CD8-positive, alpha-beta T cell (primary cell): ENCODE measurements at regions of chr20 and their contacts with region 1.

Region 1: DNA sequence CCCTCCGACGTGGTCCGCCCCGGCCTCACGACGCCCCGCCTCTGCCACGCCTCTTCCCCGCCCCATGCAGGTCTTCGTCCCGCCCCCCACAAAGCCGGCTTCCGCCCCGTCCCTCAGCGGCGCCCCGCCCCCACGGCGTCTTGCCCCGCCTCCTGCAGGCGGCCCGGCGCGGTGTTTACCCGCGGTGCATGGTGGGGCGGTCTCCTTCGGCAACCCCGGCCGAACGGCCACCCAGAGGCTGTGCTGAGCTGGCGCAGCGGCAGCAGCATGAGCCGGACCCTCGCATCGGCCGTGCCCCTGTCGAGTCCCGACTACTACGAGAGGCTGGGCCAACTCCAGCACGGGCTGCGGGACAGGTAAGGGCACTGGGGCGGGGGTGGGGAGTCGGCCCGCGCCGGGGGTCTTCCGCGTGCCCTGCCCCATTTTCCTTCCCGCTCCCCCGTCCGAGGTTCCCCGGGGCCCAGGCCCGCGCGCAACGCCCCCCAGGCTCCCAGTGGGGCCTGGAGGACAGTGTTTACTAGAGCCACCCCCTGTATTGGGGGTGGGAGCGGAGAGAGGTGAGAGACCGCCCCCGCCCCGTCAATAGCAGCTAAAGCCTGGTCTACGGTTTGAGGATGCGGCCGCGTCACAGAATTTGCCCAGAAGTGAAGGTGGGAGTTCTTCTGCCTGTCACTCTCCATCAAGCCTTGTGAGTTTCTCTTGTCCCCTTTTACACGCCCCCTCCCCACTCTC is at the start of gene KIZ:
- DNase-seq: peak; percentile 94 to 99 (median 98)
- ATAC-seq: peak; percentile 97
- H3K4me3 ChIP-seq: peak within 1 kb of the TSS; percentile 83 to 87
- H3K4me3 Mint-ChIP-seq: peak within 1 kb of the TSS; percentile 86
- H3K27ac ChIP-seq: peak within 1 kb of the TSS; percentile 68
- H3K27ac Mint-ChIP-seq: peak within 1 kb of the TSS; percentile 97
- H3K4me1 ChIP-seq: peaks cover 14% of the 10 kb centered on the region
- H3K4me1 Mint-ChIP-seq: peaks cover 30% of the 10 kb centered on the region
- H3K27me3 ChIP-seq: peaks cover 0 to under 1% of the 10 kb centered on the region in 2 experiments
- H3K27me3 Mint-ChIP-seq: peaks cover under 1% of the 10 kb centered on the region
- CTCF ChIP-seq: peak; percentile 53
- total RNA-seq, gene KIZ: 18.4 to 26.1 TPM

Region 2: DNA sequence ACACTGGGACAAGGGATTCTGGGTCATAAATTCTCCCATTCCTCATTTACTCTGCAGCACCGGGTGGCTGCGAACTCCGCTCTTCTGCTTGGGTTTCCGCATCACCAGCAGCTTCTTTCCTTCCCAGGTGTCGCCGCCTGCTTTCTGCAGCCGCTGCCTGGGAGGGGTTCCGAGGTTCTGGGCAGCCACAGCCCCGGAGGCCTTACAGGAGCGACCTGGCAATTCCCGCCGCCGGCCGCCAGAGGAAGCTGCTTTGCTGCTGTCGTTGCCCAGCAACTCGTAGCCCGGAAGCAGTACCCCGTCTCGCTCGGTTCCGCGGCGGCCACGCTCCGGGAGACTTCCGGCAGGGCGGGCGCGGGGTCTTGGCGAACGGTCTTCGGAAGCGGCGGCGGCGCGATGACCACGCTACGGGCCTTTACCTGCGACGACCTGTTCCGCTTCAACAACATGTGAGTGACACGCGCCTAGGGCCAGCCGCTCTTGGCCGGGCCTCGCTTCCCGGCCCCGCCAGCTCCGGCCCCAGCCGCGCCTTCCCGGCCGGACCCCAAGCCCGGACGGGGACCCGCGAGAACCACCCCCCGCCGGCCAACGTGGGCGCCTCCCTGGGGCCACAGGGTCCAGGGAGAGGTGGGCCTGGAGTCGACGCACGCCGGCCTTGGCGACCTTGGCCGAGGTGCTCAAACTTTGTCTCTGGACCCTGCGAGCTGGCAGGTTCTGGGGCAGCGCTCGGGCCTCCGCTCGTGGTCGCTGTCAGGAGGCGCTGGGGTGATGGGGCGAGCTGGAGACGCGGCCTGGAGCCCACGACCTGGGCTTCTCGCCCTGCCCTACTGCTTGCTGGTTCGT is 1108.8 kb before region 1 on chr20 and contains the start of gene NAA20:
- CTCF ChIA-PET with region 1: no interaction called
- POLR2A ChIA-PET with region 1: no interaction called
- intact Hi-C with region 1: loop called (anchors 5 to 10 kb)
- DNase-seq: peak; percentile 75 to 94 (median 91)
- ATAC-seq: peak; percentile 94
- H3K4me3 ChIP-seq: peak within 1 kb of the TSS; percentile 77 to 89
- H3K4me3 Mint-ChIP-seq: peak within 1 kb of the TSS; percentile 91
- H3K27ac ChIP-seq: peak within 1 kb of the TSS; percentile 63 to 82
- H3K27ac Mint-ChIP-seq: peak within 1 kb of the TSS; percentile 91
- H3K4me1 ChIP-seq: peaks cover 44% of the 10 kb centered on the region
- H3K4me1 Mint-ChIP-seq: peaks cover 53% of the 10 kb centered on the region
- H3K27me3 ChIP-seq: no peaks in the 10 kb centered on the region
- H3K27me3 Mint-ChIP-seq: no peaks in the 10 kb centered on the region
- CTCF ChIP-seq: peak; percentile 58
- total RNA-seq, gene NAA20: 32.9 to 33.2 TPM

Region 3: GRCh38 chr20:20712474-20713243 is 413.4 kb before region 1 on chr20 and contains the start of gene RALGAPA2:
- CTCF ChIA-PET with region 1: no interaction called
- POLR2A ChIA-PET with region 1: no interaction called
- intact Hi-C with region 1: loop called in 1 of 2 experiments (anchors 2 kb)
- DNase-seq: peak; percentile 87 to 97 (median 94)
- ATAC-seq: peak; percentile 95
- H3K4me3 ChIP-seq: peak within 1 kb of the TSS; percentile 66 to 89
- H3K4me3 Mint-ChIP-seq: peak within 1 kb of the TSS; percentile 98
- H3K27ac ChIP-seq: peak within 1 kb of the TSS; percentile 59 to 93
- H3K27ac Mint-ChIP-seq: peak within 1 kb of the TSS; percentile 97
- H3K4me1 ChIP-seq: peaks cover 14% of the 10 kb centered on the region
- H3K4me1 Mint-ChIP-seq: peaks cover 30% of the 10 kb centered on the region
- H3K27me3 ChIP-seq: no peaks in the 10 kb centered on the region
- H3K27me3 Mint-ChIP-seq: peaks cover 2% of the 10 kb centered on the region
- CTCF ChIP-seq: no peak
- total RNA-seq, gene RALGAPA2: 15.4 to 17.5 TPM

Region 4: DNA sequence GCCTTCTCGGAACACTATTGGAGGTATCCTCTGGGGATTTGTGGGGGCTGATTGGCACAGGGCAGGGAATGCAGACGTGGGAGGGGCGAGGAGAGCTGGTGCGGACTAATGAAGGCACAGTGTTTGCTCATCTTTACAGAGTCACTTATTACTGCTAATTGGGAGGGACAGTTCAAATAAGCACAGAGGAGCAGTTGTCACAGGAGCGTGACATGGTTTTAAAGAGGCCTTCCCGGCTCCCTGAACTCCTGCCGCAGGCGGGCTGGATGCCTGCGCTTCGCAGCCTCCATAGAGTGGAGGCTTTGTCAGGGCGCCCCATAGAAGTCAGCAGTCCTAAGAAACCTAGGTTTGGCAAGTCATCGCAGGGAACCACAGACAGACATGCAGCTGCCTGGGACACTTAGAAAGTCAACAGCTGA is 169.5 kb before region 1 on chr20:
- CTCF ChIA-PET with region 1: no interaction called
- POLR2A ChIA-PET with region 1: no interaction called
- intact Hi-C with region 1: no loop called
- DNase-seq: no peak
- ATAC-seq: no peak
- H3K4me3 ChIP-seq: no peak overlapping the region
- H3K4me3 Mint-ChIP-seq: no peak overlapping the region
- H3K27ac ChIP-seq: no peak overlapping the region
- H3K27ac Mint-ChIP-seq: no peak overlapping the region
- H3K4me1 ChIP-seq: no peaks in the 10 kb centered on the region
- H3K4me1 Mint-ChIP-seq: no peaks in the 10 kb centered on the region
- H3K27me3 ChIP-seq: no peaks in the 10 kb centered on the region
- H3K27me3 Mint-ChIP-seq: peaks cover 21% of the 10 kb centered on the region
- CTCF ChIP-seq: no peak

Region 5: DNA sequence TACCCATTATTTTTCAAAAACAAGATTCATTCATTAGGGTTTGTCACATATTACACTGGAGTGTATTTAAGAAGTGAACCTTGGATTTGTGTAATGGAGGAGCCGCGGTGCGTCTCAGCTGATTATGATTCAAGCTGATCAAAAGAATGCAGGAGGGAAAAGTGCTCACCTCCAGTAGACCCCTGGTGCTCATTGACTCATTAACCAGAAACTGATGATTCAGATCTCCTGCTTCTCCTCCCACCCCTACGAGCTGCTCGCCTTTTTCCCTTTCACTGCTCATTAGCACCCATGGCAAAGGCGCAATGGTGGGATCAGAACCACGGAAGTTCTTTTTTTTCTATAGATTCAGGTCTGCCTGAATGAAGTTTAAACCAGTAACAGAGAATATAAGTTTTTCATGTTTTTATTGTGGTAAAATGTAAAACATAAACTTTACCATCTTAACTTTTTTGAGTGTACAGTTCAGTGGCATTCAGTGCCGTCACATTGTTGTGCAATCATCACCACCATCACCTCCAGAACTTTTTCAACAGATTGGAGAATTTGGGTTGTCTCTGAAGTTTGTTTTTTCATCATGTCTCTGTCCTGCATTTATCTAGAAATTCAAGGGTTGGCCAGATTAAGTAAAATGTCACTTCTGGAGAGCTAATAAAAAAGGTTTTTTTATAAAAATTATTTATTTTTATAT is 121.5 kb before region 1 on chr20:
- CTCF ChIA-PET with region 1: no interaction called
- POLR2A ChIA-PET with region 1: no interaction called
- intact Hi-C with region 1: no loop called
- DNase-seq: no peak
- ATAC-seq: no peak
- H3K4me3 ChIP-seq: no peak overlapping the region
- H3K4me3 Mint-ChIP-seq: no peak overlapping the region
- H3K27ac ChIP-seq: no peak overlapping the region
- H3K27ac Mint-ChIP-seq: no peak overlapping the region
- H3K4me1 ChIP-seq: no peaks in the 10 kb centered on the region
- H3K4me1 Mint-ChIP-seq: no peaks in the 10 kb centered on the region
- H3K27me3 ChIP-seq: no peaks in the 10 kb centered on the region
- H3K27me3 Mint-ChIP-seq: peaks cover 16% of the 10 kb centered on the region
- CTCF ChIP-seq: no peak

Region 6: DNA sequence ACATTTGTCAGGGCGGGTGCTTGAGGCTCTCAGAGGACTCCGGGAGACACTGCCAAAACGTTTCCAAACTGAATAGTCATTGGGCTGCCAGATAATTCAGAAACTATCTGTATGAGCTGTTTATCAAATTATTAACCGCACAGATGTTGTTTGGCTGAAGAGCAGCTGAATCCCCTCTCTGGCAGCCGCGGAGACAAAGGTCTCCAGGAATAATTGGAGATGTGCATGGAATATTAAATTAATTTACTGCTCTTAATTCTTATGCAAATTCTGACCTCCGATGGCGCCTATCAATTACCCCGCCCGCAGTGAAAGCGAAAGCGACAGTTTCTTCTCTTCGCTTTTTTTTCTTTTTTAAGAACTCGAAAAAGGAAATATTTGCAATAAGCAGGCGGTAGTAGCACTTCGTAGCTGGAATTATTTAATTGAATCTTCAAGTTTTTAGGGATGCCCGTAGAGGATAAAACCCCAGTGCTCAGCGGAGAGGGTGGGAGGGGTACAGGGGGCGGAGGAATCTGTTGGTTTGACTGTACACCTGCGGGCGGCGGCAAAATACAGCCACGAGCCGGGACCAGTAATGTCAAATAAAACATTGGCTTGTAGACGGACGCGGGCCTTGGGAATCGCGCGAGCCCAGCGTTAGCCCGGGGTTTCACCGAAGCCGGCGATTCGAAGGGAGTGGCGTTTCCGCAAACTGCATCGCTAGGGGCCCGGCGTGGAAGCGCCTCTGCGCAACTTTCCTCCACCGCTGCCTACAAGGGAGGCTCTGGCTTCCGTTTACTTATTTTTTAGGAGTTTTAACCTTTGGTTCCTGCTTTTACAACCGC is 26.1 kb before region 1 on chr20:
- CTCF ChIA-PET with region 1: interaction called, 3 read pairs
- POLR2A ChIA-PET with region 1: interaction called, 3 read pairs
- intact Hi-C with region 1: loop called (anchors 1 kb)
- DNase-seq: peak in 6 of 9 experiments; percentile 32 to 76 (median 52)
- ATAC-seq: peak; percentile 45
- H3K4me3 ChIP-seq: peak overlapping the region; percentile 66 to 71
- H3K4me3 Mint-ChIP-seq: peak overlapping the region; percentile 84
- H3K27ac ChIP-seq: peak overlapping the region; percentile 44 to 73
- H3K27ac Mint-ChIP-seq: peak overlapping the region; percentile 71
- H3K4me1 ChIP-seq: peaks cover 43% of the 10 kb centered on the region
- H3K4me1 Mint-ChIP-seq: peaks cover 40% of the 10 kb centered on the region
- H3K27me3 ChIP-seq: peaks cover 46 to 51% of the 10 kb centered on the region in 2 experiments
- H3K27me3 Mint-ChIP-seq: peaks cover 82% of the 10 kb centered on the region
- CTCF ChIP-seq: no peak

Region 7: DNA sequence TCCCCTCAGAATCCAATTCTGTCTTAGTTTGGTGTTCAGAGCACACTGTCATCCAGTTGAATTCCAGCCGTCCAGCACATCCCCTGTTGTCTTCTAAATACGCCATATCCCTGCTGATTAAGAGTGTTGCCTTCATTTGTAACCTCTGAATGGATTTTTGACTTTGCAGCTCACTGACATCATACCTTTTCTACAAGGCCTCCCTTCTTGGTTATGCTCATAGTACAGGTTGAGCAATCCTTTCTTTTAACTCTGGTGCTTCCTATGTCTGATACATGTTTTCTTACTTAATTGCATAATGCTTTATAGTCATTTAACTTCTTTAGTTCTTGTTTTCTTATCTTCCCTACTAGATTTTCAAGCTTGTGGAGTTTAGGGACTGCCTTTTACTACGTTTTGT is 213.5 kb after region 1 on chr20:
- CTCF ChIA-PET with region 1: no interaction called
- POLR2A ChIA-PET with region 1: no interaction called
- intact Hi-C with region 1: no loop called
- DNase-seq: no peak
- ATAC-seq: no peak
- H3K4me3 ChIP-seq: no peak overlapping the region
- H3K4me3 Mint-ChIP-seq: no peak overlapping the region
- H3K27ac ChIP-seq: no peak overlapping the region
- H3K27ac Mint-ChIP-seq: no peak overlapping the region
- H3K4me1 ChIP-seq: no peaks in the 10 kb centered on the region
- H3K4me1 Mint-ChIP-seq: peaks cover 2% of the 10 kb centered on the region
- H3K27me3 ChIP-seq: no peaks in the 10 kb centered on the region
- H3K27me3 Mint-ChIP-seq: no peaks in the 10 kb centered on the region
- CTCF ChIP-seq: no peak

Region 8: DNA sequence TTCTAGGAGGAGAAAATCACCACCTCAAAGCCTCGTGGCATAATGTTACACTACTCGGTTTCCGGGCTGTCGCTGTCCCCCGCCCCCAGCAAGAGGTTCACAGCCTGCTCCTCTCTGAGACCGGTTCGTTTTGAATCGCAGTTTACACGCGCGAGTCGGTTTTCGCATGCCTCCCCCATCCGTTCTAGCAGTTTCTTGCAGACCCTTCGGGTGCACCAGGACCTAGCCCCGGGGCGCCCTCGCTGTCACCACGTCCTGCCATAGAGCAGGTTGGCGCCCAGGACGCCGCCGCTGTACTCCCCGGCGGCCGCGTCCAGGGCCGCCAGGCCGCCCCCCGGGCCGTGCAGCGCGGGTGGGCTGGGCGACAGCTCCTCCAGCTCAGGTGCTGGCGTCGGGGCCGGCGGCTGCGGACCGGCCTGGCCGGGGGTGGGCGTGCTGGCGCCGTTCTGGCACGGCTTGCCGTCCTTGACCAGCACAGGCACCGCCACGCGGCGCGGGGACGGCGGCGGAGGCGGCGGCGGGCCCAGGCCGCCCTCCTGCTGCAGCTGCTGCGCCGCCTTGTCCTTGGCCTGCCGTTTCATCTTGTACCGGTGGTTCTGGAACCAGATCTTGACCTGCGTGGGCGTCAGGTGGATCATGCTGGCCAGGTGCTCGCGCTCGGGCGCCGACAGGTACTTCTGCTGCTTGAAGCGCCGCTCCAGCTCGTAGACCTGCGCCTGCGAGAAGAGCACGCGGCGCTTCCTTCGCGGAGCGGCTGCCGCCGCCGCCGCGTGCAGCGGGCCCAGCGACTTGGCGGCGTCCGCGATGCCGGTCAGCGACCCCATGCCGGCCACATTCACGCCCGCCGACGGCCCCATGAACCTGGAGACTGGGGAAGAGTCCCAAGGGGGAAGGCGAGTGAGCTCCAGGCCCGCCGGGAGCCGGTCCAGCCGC is 269.9 kb after region 1 on chr20:
- CTCF ChIA-PET with region 1: no interaction called
- POLR2A ChIA-PET with region 1: no interaction called
- intact Hi-C with region 1: loop called in 1 of 2 experiments (anchors 2 kb)
- DNase-seq: peak in 8 of 9 experiments; percentile 11 to 86 (median 64)
- ATAC-seq: peak; percentile 89
- H3K4me3 ChIP-seq: no peak overlapping the region
- H3K4me3 Mint-ChIP-seq: peak overlapping the region; percentile 79
- H3K27ac ChIP-seq: no peak overlapping the region
- H3K27ac Mint-ChIP-seq: no peak overlapping the region
- H3K4me1 ChIP-seq: peaks cover 13% of the 10 kb centered on the region
- H3K4me1 Mint-ChIP-seq: peaks cover 23% of the 10 kb centered on the region
- H3K27me3 ChIP-seq: peaks cover 54 to 58% of the 10 kb centered on the region in 2 experiments
- H3K27me3 Mint-ChIP-seq: peaks cover 71% of the 10 kb centered on the region
- CTCF ChIP-seq: no peak

Region 9: GRCh38 chr20:21808863-21809664 is 683.0 kb after region 1 on chr20:
- CTCF ChIA-PET with region 1: no interaction called
- POLR2A ChIA-PET with region 1: no interaction called
- intact Hi-C with region 1: no loop called
- DNase-seq: peak in 4 of 9 experiments; percentile 7 to 27 (median 10)
- ATAC-seq: no peak
- H3K4me3 ChIP-seq: no peak overlapping the region
- H3K4me3 Mint-ChIP-seq: no peak overlapping the region
- H3K27ac ChIP-seq: no peak overlapping the region
- H3K27ac Mint-ChIP-seq: no peak overlapping the region
- H3K4me1 ChIP-seq: no peaks in the 10 kb centered on the region
- H3K4me1 Mint-ChIP-seq: no peaks in the 10 kb centered on the region
- H3K27me3 ChIP-seq: no peaks in the 10 kb centered on the region
- H3K27me3 Mint-ChIP-seq: no peaks in the 10 kb centered on the region
- CTCF ChIP-seq: peak; percentile 59